ENCODE measurements at regions of chr2 and their contacts with region 1.

Region 1: DNA sequence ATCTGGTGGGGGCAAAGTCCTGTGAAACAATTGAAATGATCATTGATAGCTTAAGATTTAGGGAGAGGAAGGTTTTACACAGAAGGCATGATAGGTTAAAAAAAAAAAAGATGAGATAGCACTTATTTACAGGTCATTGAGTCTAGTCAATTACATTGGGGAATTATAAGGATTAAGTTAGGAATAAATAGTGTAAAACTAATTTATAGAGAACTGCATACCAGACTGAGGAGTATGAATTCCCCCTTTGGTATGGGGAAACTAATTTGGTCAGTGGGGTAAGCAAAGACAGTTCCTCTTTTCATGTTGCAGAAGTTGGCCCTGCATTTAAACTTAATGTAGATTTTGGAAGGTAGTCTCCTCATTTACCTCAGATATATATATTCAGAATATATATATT is 10.8 kb downstream of the GLS start:
- DNase-seq: peak in 2 of 3 donors; percentile 73 to 77
- H3K4me3 ChIP-seq: peak overlapping the region in 1 of 7 experiments; percentile 36
- H3K27ac ChIP-seq: no peak overlapping the region
- H3K4me1 ChIP-seq: peaks cover 9 to 50% (median 27%) of the 10 kb centered on the region in 4 experiments
- H3K27me3 ChIP-seq: no peaks in the 10 kb centered on the region

Region 2: DNA sequence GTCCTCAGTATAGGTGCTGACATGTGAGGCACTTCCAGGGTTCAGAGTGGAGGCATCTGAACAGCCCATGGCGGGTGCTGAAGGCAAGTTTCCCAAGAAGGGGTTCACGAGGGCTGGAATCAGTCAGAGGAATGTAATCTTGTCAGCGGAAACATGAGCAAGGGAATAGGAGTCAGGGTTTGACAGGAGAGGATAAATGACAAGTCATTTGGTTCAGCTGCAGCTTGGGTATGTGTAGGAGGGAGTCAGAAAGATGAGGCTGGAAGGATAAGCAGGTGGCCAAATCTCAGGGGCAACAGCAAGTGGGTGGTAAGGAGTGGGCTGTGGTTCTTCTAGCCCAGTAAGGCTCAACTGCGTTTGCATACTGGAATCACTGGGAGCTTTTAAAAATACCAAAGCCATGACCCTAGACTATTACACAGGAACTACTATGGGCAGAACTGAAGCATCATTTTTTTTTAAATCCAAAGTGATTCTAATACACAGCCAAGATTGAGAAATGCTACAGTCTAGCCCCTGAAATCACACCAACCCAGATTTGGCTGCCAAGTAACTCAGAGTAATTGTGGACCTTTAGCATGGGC is 284.3 kb before region 1 on chr2:
- CTCF ChIA-PET with region 1: no interaction called
- POLR2A ChIA-PET with region 1: no interaction called
- DNase-seq: no peak
- H3K4me3 ChIP-seq: no peak overlapping the region
- H3K27ac ChIP-seq: no peak overlapping the region
- H3K4me1 ChIP-seq: peaks cover 0 to 5% (median 0%) of the 10 kb centered on the region in 4 experiments
- H3K27me3 ChIP-seq: no peaks in the 10 kb centered on the region

Region 3: GRCh38 chr2:190880378-190881073 is 10.8 kb before region 1 on chr2 and contains the start of gene GLS:
- CTCF ChIA-PET with region 1: interaction called, 30 read pairs
- POLR2A ChIA-PET with region 1: interaction called, 6 read pairs
- DNase-seq: peak; percentile 97 to 98 (median 98)
- H3K4me3 ChIP-seq: peak within 1 kb of the TSS; percentile 70 to 94 (median 89)
- H3K27ac ChIP-seq: peak within 1 kb of the TSS; percentile 83 to 92
- H3K4me1 ChIP-seq: peaks cover 25 to 70% (median 46%) of the 10 kb centered on the region in 4 experiments
- H3K27me3 ChIP-seq: no peaks in the 10 kb centered on the region

Region 4: GRCh38 chr2:190965580-190966222 is 74.3 kb after region 1 on chr2:
- CTCF ChIA-PET with region 1: no interaction called
- POLR2A ChIA-PET with region 1: no interaction called
- DNase-seq: no peak
- H3K4me3 ChIP-seq: no peak overlapping the region
- H3K27ac ChIP-seq: no peak overlapping the region
- H3K4me1 ChIP-seq: peaks cover 0 to 8% (median 5%) of the 10 kb centered on the region in 4 experiments
- H3K27me3 ChIP-seq: no peaks in the 10 kb centered on the region

Region 5: GRCh38 chr2:190996338-190996946 is 105.1 kb after region 1 on chr2:
- CTCF ChIA-PET with region 1: no interaction called
- POLR2A ChIA-PET with region 1: no interaction called
- DNase-seq: peak; percentile 60 to 76 (median 74)
- H3K4me3 ChIP-seq: no peak overlapping the region
- H3K27ac ChIP-seq: no peak overlapping the region
- H3K4me1 ChIP-seq: no peaks in the 10 kb centered on the region
- H3K27me3 ChIP-seq: no peaks in the 10 kb centered on the region

Region 6: DNA sequence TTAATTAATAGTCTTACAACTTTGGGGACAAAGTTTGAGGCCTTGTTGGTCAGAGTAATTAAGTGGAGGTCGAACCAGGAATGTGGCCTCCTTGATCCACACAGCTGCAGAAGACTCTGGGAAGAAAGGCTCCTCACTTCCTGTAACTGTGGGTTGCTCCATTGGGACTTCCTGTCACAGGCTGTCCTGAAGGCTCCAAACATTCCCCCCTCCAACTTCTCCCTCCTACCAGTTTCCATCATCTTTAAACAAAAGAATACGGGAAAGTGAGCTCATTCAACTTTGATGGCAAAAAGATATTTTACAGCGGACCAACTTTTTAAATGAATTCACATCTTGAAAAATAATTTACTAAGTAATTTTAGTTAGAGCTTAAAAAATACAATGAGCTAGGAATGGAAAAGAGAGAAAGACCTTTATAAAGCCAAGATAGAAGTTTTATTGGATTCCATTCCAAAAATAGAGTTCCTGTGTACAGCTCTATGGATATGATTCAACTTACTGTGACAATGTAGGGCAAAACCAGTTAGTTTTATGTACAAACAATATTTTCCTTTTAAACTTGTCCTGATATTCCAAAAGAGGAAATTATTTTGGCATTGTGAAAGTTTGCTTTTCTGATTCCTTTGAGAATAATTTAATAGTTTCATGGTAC is 574.5 kb after region 1 on chr2:
- CTCF ChIA-PET with region 1: no interaction called
- POLR2A ChIA-PET with region 1: no interaction called
- DNase-seq: no peak
- H3K4me3 ChIP-seq: no peak overlapping the region
- H3K27ac ChIP-seq: no peak overlapping the region
- H3K4me1 ChIP-seq: no peaks in the 10 kb centered on the region
- H3K27me3 ChIP-seq: no peaks in the 10 kb centered on the region